ENCODE measurements at regions of chr3 and their contacts with region 1.

Region 1: DNA sequence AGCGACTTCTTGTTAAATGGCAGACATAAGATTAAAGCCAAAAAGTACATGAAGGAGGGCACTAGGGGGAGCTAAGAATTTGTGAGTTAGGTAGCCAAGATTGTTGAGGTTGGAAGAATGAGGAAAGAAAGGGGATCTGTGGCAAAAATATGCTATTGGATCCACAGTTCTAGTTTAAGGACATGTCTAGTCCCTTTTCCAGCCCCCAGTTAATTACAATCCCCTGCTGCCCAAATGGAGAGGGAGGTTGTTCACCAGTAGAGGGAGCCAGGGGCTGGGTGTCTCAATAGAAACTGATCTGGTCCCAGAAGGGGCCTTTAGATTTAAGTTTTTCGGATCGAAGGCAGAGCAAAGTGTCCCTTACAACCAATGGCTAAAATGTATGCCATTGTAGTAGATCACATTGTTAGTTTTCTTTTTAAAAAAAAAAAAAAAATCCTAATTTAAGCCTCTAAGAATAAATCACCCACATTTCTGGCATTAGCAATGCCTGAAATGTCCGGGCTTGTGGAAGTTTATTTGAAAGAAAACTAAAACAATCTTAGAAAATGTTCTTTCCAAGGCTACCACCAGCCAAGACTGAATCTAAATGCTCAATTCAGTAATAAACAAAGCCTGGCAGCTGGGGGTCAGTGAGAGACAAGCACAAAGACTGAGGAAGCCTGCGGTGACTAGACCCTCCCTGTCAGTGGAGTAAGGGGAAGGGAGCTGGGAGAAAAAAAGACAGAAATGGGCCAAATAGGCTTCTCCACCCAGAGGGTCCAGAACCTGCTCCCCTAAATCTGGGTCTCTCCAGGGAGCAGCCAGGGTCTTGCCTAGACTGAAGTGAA is 7.1 kb downstream of the COL8A1 start:
- DNase-seq: peak; percentile 81
- ATAC-seq: peak; percentile 50
- H3K4me3 ChIP-seq: no peak overlapping the region
- H3K27ac ChIP-seq: peak overlapping the region; percentile 89
- H3K4me1 ChIP-seq: peaks cover 20% of the 10 kb centered on the region
- H3K27me3 ChIP-seq: no peaks in the 10 kb centered on the region
- CTCF ChIP-seq: peak; percentile 66
- POLR2A ChIP-seq: no peak
- RAD21 ChIP-seq: peak; percentile 59

Region 2: DNA sequence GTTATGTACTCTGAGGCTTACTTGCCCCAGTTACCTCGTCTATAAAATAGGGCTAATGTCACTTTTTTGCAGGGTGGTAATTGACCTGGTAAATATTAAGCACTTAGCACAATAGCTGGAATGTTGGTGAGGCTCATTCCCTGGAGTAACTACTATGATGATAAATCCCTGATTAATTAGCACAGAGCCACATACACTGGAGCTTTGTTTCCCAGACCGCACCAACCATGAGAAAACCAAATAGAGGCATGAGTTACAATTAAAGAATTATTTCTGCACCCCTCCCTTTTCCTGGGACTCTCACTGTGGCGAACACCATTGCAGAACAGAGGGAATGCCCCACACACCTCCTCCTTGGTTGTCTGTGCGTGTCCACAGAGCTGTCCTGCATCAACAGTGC is 975.5 kb before region 1 on chr3:
- CTCF ChIA-PET with region 1: no interaction called
- POLR2A ChIA-PET with region 1: no interaction called
- dilution Hi-C with region 1: no loop called
- in situ Hi-C with region 1: no loop called
- intact Hi-C with region 1: no loop called
- DNase-seq: no peak
- ATAC-seq: no peak
- H3K4me3 ChIP-seq: no peak overlapping the region
- H3K27ac ChIP-seq: no peak overlapping the region
- H3K4me1 ChIP-seq: no peaks in the 10 kb centered on the region
- H3K27me3 ChIP-seq: peaks cover 5% of the 10 kb centered on the region
- CTCF ChIP-seq: no peak
- POLR2A ChIP-seq: no peak
- RAD21 ChIP-seq: no peak

Region 3: GRCh38 chr3:99394831-99395778 is 250.4 kb before region 1 on chr3:
- CTCF ChIA-PET with region 1: no interaction called
- POLR2A ChIA-PET with region 1: no interaction called
- dilution Hi-C with region 1: no loop called
- in situ Hi-C with region 1: no loop called
- intact Hi-C with region 1: loop called (anchors 10 kb)
- DNase-seq: peak; percentile 89
- ATAC-seq: peak; percentile 85
- H3K4me3 ChIP-seq: no peak overlapping the region
- H3K27ac ChIP-seq: peak overlapping the region; percentile 86
- H3K4me1 ChIP-seq: peaks cover 14% of the 10 kb centered on the region
- H3K27me3 ChIP-seq: no peaks in the 10 kb centered on the region
- CTCF ChIP-seq: no peak
- POLR2A ChIP-seq: no peak
- RAD21 ChIP-seq: no peak; the same call in 1 of the 2 replicates

Region 4: GRCh38 chr3:99656624-99657023 is 11.1 kb after region 1 on chr3:
- CTCF ChIA-PET with region 1: interaction called, 12 read pairs
- POLR2A ChIA-PET with region 1: no interaction called
- dilution Hi-C with region 1: no loop called
- in situ Hi-C with region 1: no loop called
- intact Hi-C with region 1: no loop called
- DNase-seq: no peak
- ATAC-seq: no peak
- H3K4me3 ChIP-seq: no peak overlapping the region
- H3K27ac ChIP-seq: no peak overlapping the region
- H3K4me1 ChIP-seq: peaks cover 12% of the 10 kb centered on the region
- H3K27me3 ChIP-seq: no peaks in the 10 kb centered on the region
- CTCF ChIP-seq: no peak
- POLR2A ChIP-seq: no peak
- RAD21 ChIP-seq: no peak

Region 5: DNA sequence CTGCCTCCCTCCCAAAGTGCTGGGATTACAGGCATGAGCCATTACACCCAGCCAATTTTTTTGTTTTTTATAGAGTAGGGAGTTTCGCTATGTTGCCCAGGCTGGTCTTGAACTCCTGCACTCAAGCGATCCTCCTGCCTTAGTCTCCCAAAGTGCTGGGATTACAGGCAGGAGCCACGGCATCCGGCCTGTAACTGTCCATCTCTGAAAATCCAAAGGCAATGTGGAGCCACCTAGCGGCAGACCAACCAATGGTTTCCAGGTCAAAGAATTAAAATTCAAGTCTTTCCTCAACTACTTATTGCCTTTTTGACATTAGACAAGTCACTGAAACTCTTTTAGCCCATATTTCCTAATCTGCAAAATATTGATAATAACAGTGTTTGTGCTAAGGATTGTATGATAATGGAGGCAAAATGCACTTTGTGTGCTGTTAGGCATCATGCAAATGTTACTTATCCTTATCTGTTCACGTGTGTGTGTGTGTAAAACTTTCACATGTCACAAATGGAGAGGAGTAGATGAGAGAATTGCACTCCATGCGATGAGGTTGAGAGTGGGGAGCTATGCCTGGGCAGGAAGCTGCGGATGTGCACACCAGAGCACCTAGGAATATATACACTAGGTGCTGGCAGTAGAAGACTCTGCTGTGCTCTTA is 41.6 kb after region 1 on chr3:
- CTCF ChIA-PET with region 1: interaction called, 5 read pairs
- POLR2A ChIA-PET with region 1: no interaction called
- dilution Hi-C with region 1: no loop called
- in situ Hi-C with region 1: no loop called
- intact Hi-C with region 1: loop called (anchors 1 kb)
- DNase-seq: peak; percentile 74
- ATAC-seq: peak; percentile 72
- H3K4me3 ChIP-seq: no peak overlapping the region
- H3K27ac ChIP-seq: no peak overlapping the region
- H3K4me1 ChIP-seq: peaks cover 3% of the 10 kb centered on the region; the same call in 1 of the 2 replicates
- H3K27me3 ChIP-seq: no peaks in the 10 kb centered on the region
- CTCF ChIP-seq: peak; percentile 74
- POLR2A ChIP-seq: no peak
- RAD21 ChIP-seq: peak; percentile 79

Region 6: GRCh38 chr3:99789011-99789721 is 143.7 kb after region 1 on chr3:
- CTCF ChIA-PET with region 1: interaction called, 3 read pairs
- POLR2A ChIA-PET with region 1: no interaction called
- dilution Hi-C with region 1: no loop called
- in situ Hi-C with region 1: no loop called
- intact Hi-C with region 1: loop called (anchors 1 kb)
- DNase-seq: peak; percentile 67
- ATAC-seq: peak; percentile 97
- H3K4me3 ChIP-seq: no peak overlapping the region
- H3K27ac ChIP-seq: no peak overlapping the region
- H3K4me1 ChIP-seq: peaks cover 4% of the 10 kb centered on the region; the same call in 1 of the 2 replicates
- H3K27me3 ChIP-seq: no peaks in the 10 kb centered on the region
- CTCF ChIP-seq: peak; percentile 77
- POLR2A ChIP-seq: no peak
- RAD21 ChIP-seq: peak; percentile 83

Region 7: GRCh38 chr3:100103558-100104441 is 458.3 kb after region 1 on chr3:
- CTCF ChIA-PET with region 1: no interaction called
- POLR2A ChIA-PET with region 1: no interaction called
- dilution Hi-C with region 1: no loop called
- in situ Hi-C with region 1: no loop called
- intact Hi-C with region 1: no loop called
- DNase-seq: peak; percentile 93
- ATAC-seq: peak; percentile 82
- H3K4me3 ChIP-seq: no peak overlapping the region
- H3K27ac ChIP-seq: peak overlapping the region; percentile 90
- H3K4me1 ChIP-seq: peaks cover 31% of the 10 kb centered on the region
- H3K27me3 ChIP-seq: no peaks in the 10 kb centered on the region
- CTCF ChIP-seq: no peak
- POLR2A ChIP-seq: no peak
- RAD21 ChIP-seq: peak; percentile 16; the same call in 1 of the 2 replicates